ENCODE measurements at regions of chr7 and their contacts with region 1.

Region 1: DNA sequence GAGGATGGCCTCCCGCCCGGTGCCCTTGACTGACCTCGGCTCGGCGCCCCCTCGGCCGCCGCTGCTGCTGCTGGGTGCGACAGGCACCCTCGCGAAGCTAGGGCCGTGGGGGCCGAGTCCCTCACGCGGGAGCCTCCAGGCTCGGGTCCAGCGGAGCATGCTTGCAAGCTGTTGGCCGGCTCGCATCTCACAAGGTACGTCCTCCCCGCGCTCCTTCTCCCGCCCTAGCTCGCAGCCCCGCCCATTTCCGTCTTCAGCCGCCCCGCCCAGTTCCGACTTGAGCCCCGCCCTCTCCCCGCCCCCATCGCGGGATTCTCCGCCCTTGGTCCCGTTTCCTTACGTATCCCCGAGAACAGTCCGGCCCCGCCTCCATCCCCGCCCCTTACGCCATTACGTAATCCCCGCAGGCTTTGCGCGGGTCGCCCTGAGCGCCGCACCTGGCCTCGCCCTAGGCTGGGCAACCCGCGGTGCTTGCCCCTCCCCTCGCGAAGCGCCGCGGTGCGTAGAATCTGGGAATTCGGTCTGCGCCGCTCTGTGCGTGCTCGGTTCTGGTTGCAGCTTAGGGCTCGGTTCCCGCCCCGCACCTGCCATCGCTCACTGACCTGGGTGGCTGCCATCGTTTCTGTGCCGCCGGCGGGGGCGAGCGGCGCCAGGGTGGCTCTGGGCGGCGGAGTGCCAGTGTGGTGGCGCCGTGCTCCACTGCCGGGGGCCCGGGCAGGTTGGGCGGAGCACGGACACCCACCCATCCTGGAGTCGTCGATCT is at the start of gene ABHD11:
- DNase-seq: peak; percentile 89 to 98
- ATAC-seq: peak; percentile 64 to 78
- H3K4me3 ChIP-seq: peak within 1 kb of the TSS; percentile 78
- H3K27ac ChIP-seq: peak within 1 kb of the TSS; percentile 88 to 96
- H3K4me1 ChIP-seq: peaks cover 24% of the 10 kb centered on the region
- CTCF ChIP-seq: no peak
- EP300 ChIP-seq: no peak
- POLR2A ChIP-seq: peak; percentile 78
- RAD21 ChIP-seq: peak in 1 of 2 experiments; percentile 41; a peak in 3 of 5 replicates
- polyA plus RNA-seq, gene ABHD11: 8.1 and 10.4 TPM in 2 replicates

Region 2: DNA sequence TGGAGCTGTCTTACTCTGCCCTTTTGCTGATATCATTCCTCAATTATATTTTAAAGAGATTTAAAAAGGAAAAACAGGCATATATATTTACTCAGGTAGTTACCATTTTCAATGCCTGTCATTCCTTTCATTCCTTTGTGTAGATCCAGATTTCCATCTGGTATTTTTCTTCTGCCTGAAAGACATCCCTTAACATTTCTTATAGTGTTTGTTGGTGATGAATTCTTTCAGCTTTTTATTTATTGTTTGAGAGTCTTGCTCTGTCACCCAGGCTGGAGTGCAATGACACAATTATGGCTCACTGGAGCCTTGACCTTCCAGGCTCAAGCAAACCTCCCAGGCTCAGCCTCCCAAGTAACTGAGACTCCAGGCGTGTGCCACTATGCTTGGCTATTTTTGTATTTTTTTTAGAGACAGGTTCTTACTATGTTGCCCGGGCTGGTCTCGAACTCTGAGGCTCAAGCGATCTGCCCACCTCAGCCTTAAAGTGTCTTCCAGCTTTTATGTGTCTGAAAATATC is 819.5 kb before region 1 on chr7:
- CTCF ChIA-PET with region 1: no interaction called
- POLR2A ChIA-PET with region 1: no interaction called
- DNase-seq: no peak
- ATAC-seq: no peak
- H3K4me3 ChIP-seq: no peak overlapping the region
- H3K27ac ChIP-seq: no peak overlapping the region
- H3K4me1 ChIP-seq: peaks cover 13% of the 10 kb centered on the region; the same call in 2 of the 3 replicates
- CTCF ChIP-seq: no peak
- EP300 ChIP-seq: no peak
- POLR2A ChIP-seq: no peak
- RAD21 ChIP-seq: no peak

Region 3: DNA sequence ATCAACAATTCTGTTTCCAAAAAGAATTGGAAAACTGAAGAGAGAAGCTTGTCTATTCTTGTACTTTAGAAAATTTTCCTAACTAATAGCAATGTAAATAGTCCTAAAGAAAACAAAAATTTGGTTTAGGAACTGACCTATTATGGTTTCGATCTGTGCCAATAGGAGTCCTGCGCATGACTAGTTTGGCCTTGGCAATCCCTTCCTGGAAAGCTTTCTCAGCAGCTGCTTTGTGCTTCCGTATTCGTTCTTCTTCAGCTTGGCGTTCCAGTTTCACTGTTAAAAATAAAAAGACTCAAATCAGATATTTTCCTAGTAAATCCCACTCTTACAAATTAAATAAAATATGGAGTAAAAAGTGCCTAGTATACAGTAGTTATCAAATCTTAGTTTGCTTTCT is 268.6 kb before region 1 on chr7:
- CTCF ChIA-PET with region 1: no interaction called
- POLR2A ChIA-PET with region 1: no interaction called
- DNase-seq: no peak
- ATAC-seq: no peak
- H3K4me3 ChIP-seq: no peak overlapping the region
- H3K27ac ChIP-seq: no peak overlapping the region
- H3K4me1 ChIP-seq: no peaks in the 10 kb centered on the region
- CTCF ChIP-seq: no peak
- EP300 ChIP-seq: no peak
- POLR2A ChIP-seq: no peak
- RAD21 ChIP-seq: no peak

Region 4: DNA sequence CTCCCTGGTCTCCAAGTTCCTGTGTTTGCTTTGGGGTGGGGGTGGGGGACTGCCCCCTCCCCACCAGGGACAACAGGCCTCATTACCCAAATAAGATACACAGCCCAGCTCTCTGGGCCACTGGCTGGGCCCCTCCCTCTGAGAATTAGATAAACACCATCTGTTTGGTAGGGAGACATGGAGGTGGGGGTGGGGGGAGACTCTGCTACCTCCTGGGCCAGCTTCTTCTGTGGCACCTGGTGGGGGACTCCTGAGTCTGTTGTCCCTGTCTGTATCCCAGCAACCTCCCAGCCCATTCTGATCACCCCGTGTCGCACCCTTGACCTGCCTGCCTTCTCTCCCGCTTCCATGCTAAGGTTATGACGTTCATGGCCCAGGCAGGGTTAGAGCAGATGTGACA is 120.3 kb before region 1 on chr7:
- CTCF ChIA-PET with region 1: interaction called, 273 read pairs
- POLR2A ChIA-PET with region 1: interaction called, 3 read pairs
- DNase-seq: no peak
- ATAC-seq: no peak
- H3K4me3 ChIP-seq: no peak overlapping the region
- H3K27ac ChIP-seq: 0 out of 6 replicates have a peak overlapping the region, but pooled peaks of 1 of the 2 experiments have one; percentile 11
- H3K4me1 ChIP-seq: peaks cover 29% of the 10 kb centered on the region
- CTCF ChIP-seq: no peak
- EP300 ChIP-seq: no peak
- POLR2A ChIP-seq: no peak
- RAD21 ChIP-seq: no peak

Region 5: GRCh38 chr7:73701357-73701995 is 37.3 kb before region 1 on chr7:
- CTCF ChIA-PET with region 1: interaction called, 31 read pairs
- POLR2A ChIA-PET with region 1: interaction called, 3 read pairs
- DNase-seq: peak; percentile 74 to 95
- ATAC-seq: peak in 1 of 2 experiments; percentile 24; a peak in 3 of 6 replicates
- H3K4me3 ChIP-seq: no peak overlapping the region
- H3K27ac ChIP-seq: peak overlapping the region; percentile 99 to 100
- H3K4me1 ChIP-seq: peaks cover 75% of the 10 kb centered on the region
- CTCF ChIP-seq: peak; percentile 55
- EP300 ChIP-seq: no peak
- POLR2A ChIP-seq: no peak
- RAD21 ChIP-seq: peak; percentile 53 to 70; a peak in 4 of 5 replicates

Region 6: DNA sequence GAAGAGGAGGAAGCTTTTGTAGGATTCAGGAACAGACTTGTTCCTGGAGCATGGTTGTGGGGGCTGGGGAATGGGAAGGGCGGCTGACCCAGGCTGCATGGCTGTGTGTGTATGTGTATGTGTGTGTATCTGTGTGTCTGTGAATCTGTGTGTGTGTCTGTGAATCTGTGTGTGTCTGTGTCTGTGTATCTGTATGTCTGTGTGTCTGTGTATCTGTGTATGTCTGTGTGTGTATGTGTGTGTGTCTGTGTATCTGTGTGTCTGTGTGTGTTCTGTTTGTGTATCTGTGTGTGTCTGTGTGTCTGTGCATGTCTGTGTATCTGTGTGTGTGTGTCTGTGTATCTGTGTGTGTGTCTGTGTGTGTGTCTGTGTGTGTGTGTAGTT is 12.7 kb before region 1 on chr7:
- CTCF ChIA-PET with region 1: interaction called, 62 read pairs
- POLR2A ChIA-PET with region 1: interaction called, 3 read pairs
- DNase-seq: no peak
- ATAC-seq: peak; percentile 56 to 61
- H3K4me3 ChIP-seq: no peak overlapping the region
- H3K27ac ChIP-seq: peak overlapping the region; percentile 27 to 74; a peak in 4 of 6 replicates
- H3K4me1 ChIP-seq: peaks cover 20% of the 10 kb centered on the region
- CTCF ChIP-seq: no peak
- EP300 ChIP-seq: no peak
- POLR2A ChIP-seq: no peak
- RAD21 ChIP-seq: no peak

Region 7: DNA sequence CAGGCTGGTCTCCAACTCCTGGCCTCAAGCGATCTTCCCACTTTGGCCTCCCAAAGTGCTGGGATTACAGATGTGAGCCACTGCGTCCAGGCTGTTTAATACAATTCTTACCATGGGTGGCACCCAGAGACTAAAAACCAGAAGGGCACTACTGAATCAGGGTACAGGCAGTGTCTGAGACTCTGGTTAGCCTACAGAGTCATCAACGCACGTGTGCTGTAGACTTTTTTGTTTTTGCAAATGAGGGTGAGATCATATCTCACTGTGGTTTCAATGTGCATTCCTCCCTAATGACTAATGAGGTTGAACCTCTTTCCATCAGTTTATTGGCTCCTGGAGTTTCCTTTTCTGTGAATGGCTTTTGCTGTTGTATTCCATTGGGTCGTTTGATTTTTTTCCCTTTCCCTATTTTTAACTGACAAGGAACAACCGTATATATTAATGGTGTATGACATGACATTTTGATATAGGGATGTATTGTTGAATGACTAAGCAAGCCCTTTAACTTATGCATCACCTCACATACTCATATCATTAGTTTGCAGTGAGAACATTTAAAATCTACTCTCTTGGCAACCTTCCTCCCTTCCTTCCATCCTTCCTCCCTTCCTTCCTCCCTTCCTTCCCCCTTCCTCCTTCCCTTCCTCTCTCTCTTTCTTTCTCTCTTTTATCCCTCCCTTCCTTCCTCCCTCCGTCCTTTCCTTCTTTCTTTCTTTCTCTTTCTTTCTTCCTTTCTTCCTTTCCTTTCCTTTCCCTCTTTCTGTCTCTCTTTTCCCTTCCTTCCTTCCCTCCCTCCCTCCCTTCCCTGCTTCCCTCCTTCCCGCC is 112.8 kb after region 1 on chr7:
- CTCF ChIA-PET with region 1: interaction called, 47 read pairs
- POLR2A ChIA-PET with region 1: interaction called, 4 read pairs
- DNase-seq: peak; percentile 62 to 79
- ATAC-seq: peak; percentile 65 to 74
- H3K4me3 ChIP-seq: no peak overlapping the region
- H3K27ac ChIP-seq: peak overlapping the region; percentile 73 to 83
- H3K4me1 ChIP-seq: peaks cover 36% of the 10 kb centered on the region
- CTCF ChIP-seq: no peak
- EP300 ChIP-seq: no peak
- POLR2A ChIP-seq: no peak
- RAD21 ChIP-seq: no peak